PC-3 (cell line): ENCODE measurements at regions of chr12 and their contacts with region 1.

Region 1: DNA sequence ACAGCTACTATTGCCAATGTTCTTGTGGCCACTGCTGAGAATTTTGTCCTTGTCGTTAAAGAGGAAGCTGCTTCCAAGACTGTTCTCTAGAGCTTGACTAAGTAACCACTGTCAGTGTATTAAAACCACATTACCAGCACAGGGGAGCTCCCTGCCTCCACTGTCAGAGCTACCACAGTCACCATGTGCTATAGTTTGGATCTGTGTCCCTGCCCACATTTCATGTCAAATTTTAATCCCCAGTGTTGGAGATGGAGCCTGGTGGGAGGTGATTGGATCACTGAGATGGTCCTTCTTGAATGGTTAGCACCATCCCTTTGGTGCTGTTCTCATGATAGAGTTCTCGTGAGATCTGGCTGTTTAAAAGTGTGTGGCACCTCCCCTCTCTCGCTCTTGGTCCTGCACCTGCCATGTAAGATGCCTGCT is 23.2 kb upstream of the RAP1B start:
- DNase-seq: no peak
- ATAC-seq: no peak
- H3K4me3 ChIP-seq: no peak overlapping the region
- H3K27ac ChIP-seq: no peak overlapping the region
- H3K4me1 ChIP-seq: peaks cover 18% of the 10 kb centered on the region
- H3K27me3 ChIP-seq: no peaks in the 10 kb centered on the region
- CTCF ChIP-seq: no peak

Region 2: GRCh38 chr12:68406134-68406594 is 181.3 kb before region 1 on chr12:
- CTCF ChIA-PET with region 1: no interaction called
- POLR2A ChIA-PET with region 1: no interaction called
- intact Hi-C with region 1: no loop called
- DNase-seq: peak; percentile 75
- ATAC-seq: peak; percentile 84
- H3K4me3 ChIP-seq: no peak overlapping the region
- H3K27ac ChIP-seq: no peak overlapping the region
- H3K4me1 ChIP-seq: peaks cover 23% of the 10 kb centered on the region
- H3K27me3 ChIP-seq: no peaks in the 10 kb centered on the region
- CTCF ChIP-seq: peak; percentile 62

Region 3: DNA sequence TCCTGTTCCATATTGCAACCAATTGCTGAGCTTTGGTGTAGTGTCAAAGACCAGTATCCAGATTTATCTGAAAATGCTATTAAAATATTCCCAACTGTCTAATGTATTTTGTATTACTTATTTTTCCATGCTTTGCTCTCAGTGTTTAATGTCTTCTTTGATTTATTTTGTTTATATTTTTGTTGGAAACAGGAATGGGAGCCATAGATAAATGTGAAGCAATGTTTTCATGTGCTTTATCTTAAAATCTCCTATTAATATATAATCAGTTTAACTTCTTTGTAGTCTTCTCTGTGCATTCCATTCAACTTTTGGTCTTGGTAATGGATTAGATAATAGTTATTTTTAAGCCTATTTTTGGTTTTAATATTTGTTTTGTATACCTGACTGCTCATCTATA is 32.1 kb after region 1 on chr12:
- CTCF ChIA-PET with region 1: no interaction called
- POLR2A ChIA-PET with region 1: interaction called, 12 read pairs
- intact Hi-C with region 1: no loop called
- DNase-seq: no peak
- ATAC-seq: no peak
- H3K4me3 ChIP-seq: no peak overlapping the region
- H3K27ac ChIP-seq: no peak overlapping the region
- H3K4me1 ChIP-seq: peaks cover 19% of the 10 kb centered on the region
- H3K27me3 ChIP-seq: no peaks in the 10 kb centered on the region
- CTCF ChIP-seq: no peak